A673 (cell line): ENCODE measurements at regions of chr14 and their contacts with region 1.

Region 1: GRCh38 chr14:64880221-64881121 is 764 bp upstream of the SPTB start:
- DNase-seq: peak; percentile 77
- H3K4me3 ChIP-seq: peak overlapping the region; percentile 62
- H3K27ac ChIP-seq: no peak overlapping the region
- H3K4me1 ChIP-seq: no peaks in the 10 kb centered on the region
- H3K27me3 ChIP-seq: peaks cover 73% of the 10 kb centered on the region
- CTCF ChIP-seq: no peak

Region 2: DNA sequence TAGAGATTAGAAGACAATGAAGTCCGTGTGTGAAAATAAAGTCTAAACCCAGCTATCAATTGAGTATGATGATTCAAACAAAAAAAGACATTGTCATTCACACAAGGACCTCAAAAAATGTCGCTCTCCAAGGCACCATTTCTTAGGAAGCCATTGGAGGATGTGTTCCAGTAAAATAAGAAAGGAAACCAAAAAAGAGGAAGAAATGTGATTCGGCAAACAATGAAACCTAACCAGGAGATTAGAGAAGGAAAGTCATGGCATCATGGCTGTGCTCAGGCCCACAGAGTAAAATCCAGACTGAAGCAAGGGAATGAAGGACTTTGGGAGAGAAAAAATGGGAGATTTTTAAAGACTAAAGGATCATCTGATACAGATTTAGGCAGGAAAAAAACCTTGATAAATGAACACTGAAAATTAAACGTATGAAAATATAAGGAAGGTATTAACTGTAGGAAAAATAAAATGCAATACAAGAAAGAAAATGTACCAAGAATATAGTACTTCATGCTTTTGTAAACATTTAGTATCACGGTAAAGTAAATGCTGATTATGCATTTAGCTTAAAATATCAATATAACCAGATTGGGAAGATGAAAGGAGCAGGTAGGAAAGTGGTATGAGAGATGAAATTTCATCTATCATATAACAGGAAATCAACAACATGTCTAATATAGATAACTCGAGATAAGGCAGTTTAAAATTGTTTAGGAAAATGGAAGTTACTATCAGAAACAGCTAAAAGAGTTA is 530.6 kb before region 1 on chr14:
- CTCF ChIA-PET with region 1: no interaction called
- POLR2A ChIA-PET with region 1: no interaction called
- intact Hi-C with region 1: loop called (anchors 10 kb)
- DNase-seq: no peak
- H3K4me3 ChIP-seq: no peak overlapping the region
- H3K27ac ChIP-seq: no peak overlapping the region
- H3K4me1 ChIP-seq: no peaks in the 10 kb centered on the region
- H3K27me3 ChIP-seq: no peaks in the 10 kb centered on the region
- CTCF ChIP-seq: no peak

Region 3: DNA sequence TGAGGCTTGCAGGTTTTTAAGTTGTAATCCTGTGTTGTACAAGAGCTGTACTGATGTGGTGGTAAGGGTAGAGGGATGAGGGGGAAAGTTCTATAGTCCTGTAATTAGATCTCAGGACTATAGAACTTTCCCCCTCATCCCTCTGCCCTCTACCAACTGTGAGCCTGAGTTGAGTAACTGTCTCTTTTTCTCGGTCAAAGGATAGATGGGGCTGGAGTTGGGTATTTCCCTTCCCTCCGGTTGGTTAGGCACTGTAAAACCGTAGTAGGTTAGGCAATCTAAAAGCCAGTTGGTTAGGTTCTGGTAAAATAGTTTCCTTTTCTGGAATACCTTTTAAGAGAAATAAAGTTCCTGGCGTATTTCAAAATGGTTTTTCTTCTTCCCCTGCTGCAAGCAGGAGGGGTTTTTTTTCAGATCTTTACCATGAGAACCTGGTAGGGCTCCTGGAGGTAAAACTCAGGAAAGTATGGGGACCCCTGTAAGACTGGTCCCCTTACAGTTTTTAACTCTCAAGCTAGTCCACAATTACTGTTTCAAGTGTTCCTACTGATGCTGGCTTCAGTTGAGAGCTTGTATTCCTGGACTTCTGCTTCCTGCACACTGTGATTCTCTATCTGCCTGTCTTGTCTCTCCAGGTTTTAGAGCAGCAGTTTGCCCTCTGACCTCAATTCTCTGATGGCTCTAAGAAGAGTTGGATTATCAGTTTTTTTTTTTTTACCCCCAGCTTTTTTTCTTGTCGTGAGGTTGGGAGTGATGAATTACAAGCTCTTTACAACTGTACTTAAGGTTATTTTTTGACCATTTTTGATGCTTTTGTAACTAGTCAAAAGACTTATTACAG is 590.8 kb after region 1 on chr14:
- CTCF ChIA-PET with region 1: no interaction called
- POLR2A ChIA-PET with region 1: no interaction called
- intact Hi-C with region 1: no loop called
- DNase-seq: no peak
- H3K4me3 ChIP-seq: no peak overlapping the region
- H3K27ac ChIP-seq: no peak overlapping the region
- H3K4me1 ChIP-seq: no peaks in the 10 kb centered on the region
- H3K27me3 ChIP-seq: no peaks in the 10 kb centered on the region
- CTCF ChIP-seq: no peak